ENCODE measurements at regions of chr10 and their contacts with region 1.

Region 1: GRCh38 chr10:57628592-57629284 is 639.0 kb downstream of the IPMK start:
- DNase-seq: no peak
- ATAC-seq: no peak
- H3K4me3 ChIP-seq: no peak overlapping the region
- H3K27ac ChIP-seq: no peak overlapping the region
- H3K4me1 ChIP-seq: no peaks in the 10 kb centered on the region
- H3K27me3 ChIP-seq: no peaks in the 10 kb centered on the region
- CTCF ChIP-seq: no peak
- POLR2A ChIP-seq: no peak
- RAD21 ChIP-seq: no peak

Region 2: GRCh38 chr10:57605948-57606485 is 22.7 kb before region 1 on chr10:
- CTCF ChIA-PET with region 1: no interaction called
- POLR2A ChIA-PET with region 1: no interaction called
- dilution Hi-C with region 1: no loop called
- in situ Hi-C with region 1: no loop called
- intact Hi-C with region 1: loop called (anchors 2 kb)
- DNase-seq: no peak
- ATAC-seq: no peak
- H3K4me3 ChIP-seq: no peak overlapping the region
- H3K27ac ChIP-seq: no peak overlapping the region
- H3K4me1 ChIP-seq: no peaks in the 10 kb centered on the region
- H3K27me3 ChIP-seq: no peaks in the 10 kb centered on the region
- CTCF ChIP-seq: no peak
- POLR2A ChIP-seq: no peak
- RAD21 ChIP-seq: no peak